ENCODE measurements at regions of chr17 and their contacts with region 1.

Region 1: GRCh38 chr17:31919802-31920525 is 16.8 kb upstream of the SUZ12 start:
- DNase-seq: no peak
- ATAC-seq: peak; percentile 37; the same call in 1 of the 2 replicates
- H3K4me3 ChIP-seq: no peak overlapping the region
- H3K27ac ChIP-seq: no peak overlapping the region
- H3K4me1 ChIP-seq: no peaks in the 10 kb centered on the region
- H3K27me3 ChIP-seq: no peaks in the 10 kb centered on the region
- CTCF ChIP-seq: no peak

Region 2: DNA sequence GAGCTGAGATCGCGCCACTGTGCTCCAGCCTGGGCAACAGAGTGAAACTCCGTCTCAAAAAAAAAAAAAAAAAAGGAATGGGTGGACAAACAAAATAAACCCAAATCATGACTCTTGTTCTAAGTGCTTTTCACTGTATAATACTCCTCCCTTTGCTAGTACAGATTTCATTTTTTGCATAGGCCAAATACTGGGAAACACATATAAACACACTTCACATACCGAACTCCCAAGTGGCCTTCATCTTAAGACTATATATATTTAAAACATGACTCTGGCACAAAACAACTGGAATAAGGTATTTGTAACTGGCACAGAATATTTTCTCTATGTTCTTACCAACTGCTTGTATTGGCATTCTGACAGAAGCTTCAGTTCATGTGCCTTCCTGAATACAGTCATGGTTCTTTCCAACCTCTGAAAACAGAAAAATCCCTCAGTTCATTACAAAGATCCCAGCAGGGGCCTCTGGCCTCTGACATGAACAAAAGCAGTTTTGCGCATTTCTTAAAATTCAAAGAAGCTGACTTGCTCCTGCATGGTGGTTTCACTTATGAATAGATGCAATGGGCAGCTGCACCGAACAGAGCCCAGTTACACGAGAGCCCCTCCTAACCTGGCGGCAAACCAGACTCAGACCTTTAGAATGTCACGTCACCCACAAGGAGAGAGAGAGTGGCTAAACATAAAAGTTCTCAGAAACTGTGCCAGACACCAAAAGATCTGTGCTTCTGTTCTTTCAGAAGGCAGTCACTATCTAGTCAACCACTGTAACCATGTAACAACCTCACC is 41.9 kb before region 1 on chr17:
- CTCF ChIA-PET with region 1: interaction called, 10 read pairs
- POLR2A ChIA-PET with region 1: no interaction called
- in situ Hi-C with region 1: no loop called
- intact Hi-C with region 1: no loop called
- DNase-seq: no peak
- ATAC-seq: no peak
- H3K4me3 ChIP-seq: no peak overlapping the region
- H3K27ac ChIP-seq: no peak overlapping the region
- H3K4me1 ChIP-seq: no peaks in the 10 kb centered on the region
- H3K27me3 ChIP-seq: no peaks in the 10 kb centered on the region
- CTCF ChIP-seq: no peak

Region 3: GRCh38 chr17:31935512-31935911 is 15.5 kb after region 1 on chr17:
- CTCF ChIA-PET with region 1: interaction called, 11 read pairs
- POLR2A ChIA-PET with region 1: interaction called, 21 read pairs
- in situ Hi-C with region 1: no loop called
- intact Hi-C with region 1: no loop called
- DNase-seq: no peak
- ATAC-seq: no peak
- H3K4me3 ChIP-seq: no peak overlapping the region
- H3K27ac ChIP-seq: no peak overlapping the region
- H3K4me1 ChIP-seq: no peaks in the 10 kb centered on the region; the same call in 1 of the 2 replicates
- H3K27me3 ChIP-seq: no peaks in the 10 kb centered on the region
- CTCF ChIP-seq: no peak

Region 4: DNA sequence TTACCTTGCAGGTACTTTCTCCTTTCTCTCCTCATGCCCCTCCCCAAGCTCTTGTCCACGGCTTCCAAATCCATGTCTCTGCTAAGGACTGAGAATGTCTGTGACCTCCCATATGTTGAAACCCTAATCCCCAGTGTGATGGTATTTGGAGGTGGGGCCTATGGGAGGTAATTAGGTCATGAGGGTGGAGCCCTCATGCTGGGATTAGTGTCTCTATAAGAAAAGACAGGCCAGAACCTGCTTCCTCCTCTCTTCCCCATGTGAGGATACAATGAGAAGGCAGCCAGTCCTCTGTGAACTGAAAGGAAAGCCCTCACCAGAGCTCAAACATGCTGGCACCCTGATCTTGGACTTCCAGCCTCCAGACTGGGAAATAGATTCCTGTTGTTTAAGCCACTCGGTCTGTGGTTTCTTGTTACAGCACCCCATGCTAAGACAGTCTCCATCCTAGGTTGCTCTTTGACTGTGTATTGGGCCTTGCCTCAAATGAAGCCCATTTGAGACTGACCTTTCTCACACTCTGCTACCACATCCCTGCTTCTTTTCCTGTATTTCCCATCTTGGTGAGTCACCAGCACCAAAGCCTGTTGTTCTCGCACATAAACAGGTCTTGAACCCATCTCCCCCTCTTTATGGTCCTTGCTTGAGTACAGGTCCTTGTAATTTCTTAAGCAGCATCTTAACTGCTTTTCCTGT is 701.8 kb after region 1 on chr17:
- CTCF ChIA-PET with region 1: no interaction called
- POLR2A ChIA-PET with region 1: no interaction called
- in situ Hi-C with region 1: no loop called
- intact Hi-C with region 1: no loop called
- DNase-seq: no peak
- ATAC-seq: no peak
- H3K4me3 ChIP-seq: no peak overlapping the region
- H3K27ac ChIP-seq: no peak overlapping the region
- H3K4me1 ChIP-seq: no peaks in the 10 kb centered on the region
- H3K27me3 ChIP-seq: no peaks in the 10 kb centered on the region; the same call in 1 of the 2 replicates
- CTCF ChIP-seq: no peak

Measured in Panc1 (cell line).